Gastrocnemius medialis (tissue), 4 donors: ENCODE measurements at regions of chr1 and their contacts with region 1.

Region 1: GRCh38 chr1:185426848-185427247 is 109.8 kb upstream of the IVNS1ABP start:
- DNase-seq: no peak
- ATAC-seq: peak; percentile 36 to 52
- H3K4me3 ChIP-seq: no peak overlapping the region
- H3K27ac ChIP-seq: peak overlapping the region in 3 of 4 donors; percentile 25 to 54 (median 43)
- H3K4me1 ChIP-seq: no peaks in the 10 kb centered on the region
- H3K27me3 ChIP-seq: no peaks in the 10 kb centered on the region
- CTCF ChIP-seq: no peak
- POLR2A ChIP-seq: no peak

Region 2: DNA sequence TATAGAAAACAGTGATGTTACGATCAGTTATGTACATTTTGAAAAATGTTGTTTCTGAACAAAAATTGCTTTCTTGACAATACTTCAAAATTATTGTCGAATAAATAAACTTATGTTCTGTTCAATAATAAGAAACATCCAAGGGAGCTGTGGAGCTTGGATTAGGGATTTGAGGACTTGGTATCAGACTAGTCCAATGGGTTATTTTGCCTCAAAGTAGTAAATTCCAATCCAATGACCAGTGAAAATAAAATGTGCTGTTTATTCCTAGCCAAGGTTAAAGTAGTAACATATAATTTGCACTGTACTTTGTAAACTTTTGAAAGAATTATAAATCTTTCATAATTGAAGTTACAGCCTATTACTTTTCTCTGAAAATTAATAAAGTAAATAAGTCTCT is 30.7 kb before region 1 on chr1:
- in situ Hi-C with region 1: no loop called
- intact Hi-C with region 1: loop called (anchors 2 kb)
- DNase-seq: no peak
- ATAC-seq: no peak
- H3K4me3 ChIP-seq: no peak overlapping the region
- H3K27ac ChIP-seq: no peak overlapping the region
- H3K4me1 ChIP-seq: no peaks in the 10 kb centered on the region
- H3K27me3 ChIP-seq: no peaks in the 10 kb centered on the region
- CTCF ChIP-seq: no peak
- POLR2A ChIP-seq: no peak

Region 3: DNA sequence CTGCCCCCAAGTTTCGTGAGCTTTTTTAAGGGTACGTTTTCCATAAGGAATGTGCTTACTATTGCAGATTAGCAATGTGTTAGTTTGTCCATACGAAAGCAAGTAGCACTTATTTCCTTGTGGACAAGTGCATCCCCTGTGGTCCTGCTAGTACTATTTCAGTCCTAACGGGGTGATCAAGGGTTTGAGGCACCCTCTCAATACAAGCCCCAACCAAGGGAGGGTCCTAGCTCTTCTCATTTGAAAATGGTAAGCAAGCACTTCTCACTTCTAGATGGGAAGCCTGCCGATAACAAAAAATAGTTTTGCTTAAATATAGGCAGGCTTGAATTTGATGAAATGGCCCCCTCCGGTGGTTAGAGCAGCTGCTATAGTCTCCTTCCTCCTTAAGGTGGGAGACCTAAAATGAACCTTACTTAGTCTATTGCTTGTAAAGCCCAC is 243.4 kb after region 1 on chr1:
- in situ Hi-C with region 1: no loop called
- intact Hi-C with region 1: loop called (anchors 10 kb)
- DNase-seq: no peak
- ATAC-seq: no peak
- H3K4me3 ChIP-seq: no peak overlapping the region
- H3K27ac ChIP-seq: no peak overlapping the region
- H3K4me1 ChIP-seq: peaks cover 0 to 5% of the 10 kb centered on the region in 2 donors
- H3K27me3 ChIP-seq: no peaks in the 10 kb centered on the region
- CTCF ChIP-seq: peak in 2 of 5 experiments; percentile 24 to 36
- POLR2A ChIP-seq: no peak